HEK293T (cell line): ENCODE measurements at regions of chr19 and their contacts with region 1.

Region 1: DNA sequence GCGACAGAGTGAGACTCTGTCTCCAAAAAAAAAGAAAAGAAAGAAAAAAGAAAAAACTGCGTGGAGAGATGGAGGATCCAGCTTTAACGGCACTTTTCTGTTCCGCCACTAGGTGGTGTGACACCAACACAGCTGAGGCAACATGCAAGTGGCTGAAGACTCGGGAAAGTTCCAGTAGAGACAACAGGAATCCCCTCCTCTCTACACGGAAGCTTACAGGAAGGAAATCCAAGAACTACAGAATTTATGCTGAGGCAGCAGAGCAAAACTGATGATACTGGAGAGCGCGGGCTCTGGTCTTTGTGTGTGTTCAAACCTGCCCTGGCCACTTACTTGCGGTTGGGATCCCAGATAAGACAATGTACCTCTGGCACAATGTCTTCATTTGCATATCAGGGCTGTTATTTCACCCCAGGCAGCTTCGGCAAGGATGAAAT is 9.9 kb downstream of the RANBP3 start:
- DNase-seq: peak; percentile 82

Region 2: DNA sequence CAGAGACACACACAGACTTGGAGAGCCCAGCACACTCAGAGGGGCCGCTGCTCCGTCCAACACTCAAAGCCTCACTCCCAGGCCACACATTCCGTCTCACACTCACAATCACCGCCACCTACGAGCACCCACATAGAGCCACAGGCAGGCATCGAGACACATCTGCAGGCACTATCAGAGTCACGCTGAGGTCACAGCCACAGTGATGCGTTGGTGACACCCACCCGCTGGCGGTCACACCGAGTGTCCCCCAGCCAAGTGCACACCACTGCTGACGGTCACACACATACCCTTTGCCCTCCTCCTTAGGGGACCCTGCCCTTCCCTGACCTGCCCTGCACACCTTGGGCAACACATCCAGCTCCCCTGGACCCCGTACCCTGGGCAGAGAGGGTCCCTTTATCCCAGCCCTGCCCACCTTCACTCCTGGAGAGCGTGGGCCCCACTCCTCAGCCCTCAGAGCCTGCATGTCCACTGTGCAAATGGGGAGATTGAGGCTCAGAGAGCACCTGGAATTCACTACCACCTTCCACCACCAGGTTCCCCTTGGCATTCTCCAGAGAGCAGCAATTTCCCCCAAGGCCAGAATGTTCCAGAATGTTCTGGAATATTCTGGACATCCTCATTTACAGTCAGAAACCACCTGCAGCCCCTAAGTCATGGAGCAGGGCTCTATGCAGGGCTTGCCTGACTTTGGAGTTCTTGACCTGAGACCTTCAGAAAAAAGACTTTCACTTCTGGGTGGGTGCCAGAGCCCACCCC is 103.1 kb before region 1 on chr19:
- CTCF ChIA-PET with region 1: no interaction called
- POLR2A ChIA-PET with region 1: no interaction called
- DNase-seq: no peak

Region 3: DNA sequence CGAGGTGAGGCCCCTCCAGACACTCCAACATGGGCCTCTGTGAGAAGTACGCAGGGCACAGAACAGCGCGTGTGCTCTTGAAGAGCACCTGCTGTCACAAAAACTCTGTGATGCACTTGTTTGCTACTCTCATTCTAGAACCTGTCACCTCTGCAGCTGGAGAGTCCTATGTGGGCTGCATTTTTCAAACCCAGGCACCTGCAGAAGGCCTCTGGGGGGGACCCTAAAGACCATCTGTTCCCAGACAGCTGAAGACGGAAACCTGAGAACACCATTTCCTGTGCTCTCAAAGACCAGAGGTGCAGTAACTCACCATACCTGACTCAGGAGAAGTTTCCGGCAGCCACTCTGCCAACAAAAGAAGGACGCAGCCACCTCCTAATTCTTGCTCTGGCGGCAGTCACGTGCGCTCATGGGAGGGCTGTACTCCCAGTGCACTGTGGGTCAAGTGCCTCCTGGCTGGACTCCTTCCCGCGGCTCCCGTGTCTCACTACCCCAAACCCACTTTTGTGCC is 18.2 kb before region 1 on chr19:
- CTCF ChIA-PET with region 1: interaction called, 11 read pairs
- POLR2A ChIA-PET with region 1: no interaction called
- DNase-seq: no peak

Region 4: GRCh38 chr19:5957170-5957569 is 10.8 kb before region 1 on chr19:
- CTCF ChIA-PET with region 1: interaction called, 20 read pairs
- POLR2A ChIA-PET with region 1: no interaction called
- DNase-seq: no peak

Region 5: GRCh38 chr19:5987077-5987818 is 19.2 kb after region 1 on chr19:
- CTCF ChIA-PET with region 1: interaction called, 17 read pairs
- POLR2A ChIA-PET with region 1: interaction called, 9 read pairs
- DNase-seq: peak; percentile 75